Vagina (tissue), 2 donors: ENCODE measurements at regions of chr21 and their contacts with region 1.

Region 1: DNA sequence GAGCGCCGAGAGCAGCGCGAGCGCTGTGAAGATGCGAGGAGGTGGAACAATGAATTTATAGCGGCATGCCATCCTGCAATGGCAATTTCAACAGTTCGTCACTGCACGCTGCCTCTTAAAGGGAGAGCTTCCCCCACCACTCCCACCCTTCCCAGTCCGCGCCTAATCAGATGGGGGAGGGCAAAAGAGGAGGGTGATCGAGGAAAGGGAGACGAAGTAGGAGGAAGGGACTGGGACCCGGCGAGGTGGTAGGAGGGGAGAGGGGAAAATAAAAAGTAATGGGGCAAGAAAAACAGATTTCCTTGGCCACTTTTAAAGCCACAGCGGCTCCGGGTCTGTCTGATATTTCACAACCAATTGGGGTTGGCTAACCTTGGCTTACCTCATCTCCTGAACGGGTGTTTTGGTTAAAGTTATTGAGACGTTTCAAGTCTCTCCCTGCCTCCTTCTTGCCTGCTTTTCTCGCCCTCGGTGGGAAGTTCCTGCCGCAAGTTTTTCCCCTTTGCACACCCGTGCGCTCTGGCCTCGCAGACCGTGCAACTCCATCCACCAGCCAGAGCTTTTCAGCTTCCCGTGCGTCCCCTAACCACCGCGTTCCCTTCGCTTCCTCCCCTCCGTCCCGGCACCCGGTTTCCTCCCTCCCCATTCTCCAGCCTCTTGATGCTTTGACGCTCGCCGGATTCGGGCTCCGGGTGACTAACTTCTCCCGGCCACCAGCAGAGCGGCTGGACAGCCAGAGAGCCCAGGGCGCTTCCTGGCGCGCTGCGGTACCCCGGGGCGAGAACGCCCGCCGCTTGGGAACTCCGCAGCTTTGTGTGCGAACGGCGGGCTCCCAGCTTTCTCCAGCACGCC is at the start of gene ADAMTS5:
- DNase-seq: peak in 1 of 2 donors; percentile 92
- H3K4me3 ChIP-seq: peak within 1 kb of the TSS; percentile 64 to 65
- H3K27ac ChIP-seq: peak within 1 kb of the TSS; percentile 77
- H3K4me1 ChIP-seq: peaks cover 12% of the 10 kb centered on the region
- H3K27me3 ChIP-seq: no peaks in the 10 kb centered on the region
- CTCF ChIP-seq: no peak
- POLR2A ChIP-seq: no peak
- total RNA-seq, gene ADAMTS5: 20.4 TPM

Region 2: GRCh38 chr21:26909972-26910371 is 57.3 kb before region 1 on chr21:
- intact Hi-C with region 1: no loop called
- DNase-seq: no peak
- H3K4me3 ChIP-seq: no peak overlapping the region
- H3K27ac ChIP-seq: no peak overlapping the region
- H3K4me1 ChIP-seq: no peaks in the 10 kb centered on the region
- H3K27me3 ChIP-seq: no peaks in the 10 kb centered on the region
- CTCF ChIP-seq: no peak
- POLR2A ChIP-seq: no peak

Region 3: GRCh38 chr21:26982767-26983166 is 15.5 kb after region 1 on chr21:
- intact Hi-C with region 1: no loop called
- DNase-seq: no peak
- H3K4me3 ChIP-seq: no peak overlapping the region
- H3K27ac ChIP-seq: no peak overlapping the region
- H3K4me1 ChIP-seq: no peaks in the 10 kb centered on the region
- H3K27me3 ChIP-seq: no peaks in the 10 kb centered on the region
- CTCF ChIP-seq: no peak
- POLR2A ChIP-seq: no peak

Region 4: GRCh38 chr21:27077501-27077900 is 110.2 kb after region 1 on chr21:
- intact Hi-C with region 1: no loop called
- DNase-seq: no peak
- H3K4me3 ChIP-seq: no peak overlapping the region
- H3K27ac ChIP-seq: no peak overlapping the region
- H3K4me1 ChIP-seq: no peaks in the 10 kb centered on the region
- H3K27me3 ChIP-seq: no peaks in the 10 kb centered on the region
- CTCF ChIP-seq: no peak
- POLR2A ChIP-seq: no peak

Region 5: GRCh38 chr21:27393726-27394125 is 426.4 kb after region 1 on chr21:
- intact Hi-C with region 1: no loop called
- DNase-seq: no peak
- H3K4me3 ChIP-seq: no peak overlapping the region
- H3K27ac ChIP-seq: no peak overlapping the region
- H3K4me1 ChIP-seq: no peaks in the 10 kb centered on the region
- H3K27me3 ChIP-seq: no peaks in the 10 kb centered on the region
- CTCF ChIP-seq: no peak
- POLR2A ChIP-seq: no peak

Region 6: DNA sequence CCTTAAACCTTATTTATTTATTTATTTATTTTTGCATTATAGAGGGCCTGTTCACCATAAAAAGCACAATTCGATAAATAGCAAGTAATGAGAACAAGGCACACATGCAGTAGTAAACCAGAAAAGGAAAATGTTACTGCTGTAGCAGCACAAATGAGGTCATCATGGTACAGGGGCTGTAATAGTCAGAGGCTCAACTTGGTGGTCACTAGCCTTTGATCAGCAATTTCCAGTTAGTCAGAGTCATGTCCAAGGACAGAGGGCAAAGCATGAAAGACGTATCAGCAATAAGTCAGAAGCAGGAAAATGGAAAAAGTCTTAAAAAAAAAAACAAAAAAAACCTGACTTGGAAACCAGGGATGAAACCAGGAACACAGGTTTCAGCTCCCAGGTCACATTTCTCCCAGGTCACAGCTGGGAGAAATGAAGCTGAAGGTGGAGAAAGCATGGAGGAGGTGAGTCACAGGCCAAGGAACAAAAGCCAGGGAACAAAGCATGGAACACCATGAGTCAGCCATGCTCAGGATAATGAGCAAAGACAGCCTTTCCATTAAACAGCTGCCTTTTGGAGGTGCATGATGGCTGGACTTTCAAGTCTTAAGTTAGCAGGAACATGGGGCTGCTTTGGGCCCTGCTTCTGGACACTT is 1469.1 kb after region 1 on chr21:
- intact Hi-C with region 1: loop called (anchors 5 kb)
- DNase-seq: no peak
- H3K4me3 ChIP-seq: no peak overlapping the region
- H3K27ac ChIP-seq: peak overlapping the region; percentile 17
- H3K4me1 ChIP-seq: no peaks in the 10 kb centered on the region
- H3K27me3 ChIP-seq: no peaks in the 10 kb centered on the region
- CTCF ChIP-seq: no peak
- POLR2A ChIP-seq: no peak